H1 (cell line): ENCODE measurements at regions of chr1 and their contacts with region 1.

Region 1: DNA sequence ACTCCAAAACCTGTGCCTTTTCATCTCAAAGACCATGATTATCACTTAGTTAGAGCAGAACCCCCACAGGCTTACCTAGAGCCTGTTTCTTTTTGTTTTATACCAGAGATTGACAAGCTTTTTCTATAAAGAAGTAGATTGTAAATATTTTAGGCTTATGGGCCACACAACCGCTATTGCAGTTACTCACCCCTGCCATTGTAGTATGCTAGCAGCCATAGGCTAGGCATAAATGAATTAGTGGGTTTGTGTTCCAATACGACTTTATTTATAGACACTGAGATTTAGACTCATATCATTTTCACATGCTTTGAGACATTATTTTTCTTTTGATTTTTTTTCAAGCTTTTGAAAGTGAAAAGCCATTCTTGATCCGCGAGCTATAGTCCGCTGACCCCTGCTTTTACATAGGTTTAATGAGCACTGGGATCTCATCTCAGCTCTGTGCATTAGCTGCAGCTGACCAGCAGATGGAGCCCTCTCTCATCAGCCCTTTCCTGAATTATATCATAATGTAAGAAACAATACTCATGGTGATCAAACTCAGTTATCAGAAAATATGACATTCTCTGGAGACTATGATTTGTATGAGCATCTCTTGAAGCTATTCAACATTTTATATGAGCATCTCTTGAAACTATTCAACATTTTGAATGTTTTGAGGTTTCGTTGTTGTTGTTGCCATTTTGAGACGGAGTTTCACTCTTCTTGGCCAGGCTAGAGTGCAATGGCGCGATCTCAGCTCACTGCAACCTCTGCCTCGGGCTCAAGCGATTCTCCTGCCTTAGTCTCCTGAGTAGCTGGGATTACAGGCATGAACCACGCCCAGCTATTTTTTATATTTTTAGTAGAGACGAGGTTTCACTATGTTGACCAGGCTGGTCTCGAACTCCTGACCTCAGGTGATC is 111.9 kb upstream of the L1TD1 start:
- DNase-seq: no peak
- H3K4me3 ChIP-seq: no peak overlapping the region
- H3K27ac ChIP-seq: no peak overlapping the region
- H3K4me1 ChIP-seq: no peaks in the 10 kb centered on the region
- H3K27me3 ChIP-seq: no peaks in the 10 kb centered on the region
- CTCF ChIP-seq: peak; percentile 61 to 93 (median 79)
- EP300 ChIP-seq: no peak
- POLR2A ChIP-seq: no peak
- RAD21 ChIP-seq: peak; percentile 61 to 67

Region 2: GRCh38 chr1:61776091-61776490 is 306.6 kb before region 1 on chr1:
- CTCF ChIA-PET with region 1: no interaction called
- POLR2A ChIA-PET with region 1: no interaction called
- DNase-seq: no peak
- H3K4me3 ChIP-seq: no peak overlapping the region
- H3K27ac ChIP-seq: no peak overlapping the region
- H3K4me1 ChIP-seq: no peaks in the 10 kb centered on the region
- H3K27me3 ChIP-seq: no peaks in the 10 kb centered on the region
- CTCF ChIP-seq: no peak
- EP300 ChIP-seq: no peak
- POLR2A ChIP-seq: no peak
- RAD21 ChIP-seq: no peak

Region 3: DNA sequence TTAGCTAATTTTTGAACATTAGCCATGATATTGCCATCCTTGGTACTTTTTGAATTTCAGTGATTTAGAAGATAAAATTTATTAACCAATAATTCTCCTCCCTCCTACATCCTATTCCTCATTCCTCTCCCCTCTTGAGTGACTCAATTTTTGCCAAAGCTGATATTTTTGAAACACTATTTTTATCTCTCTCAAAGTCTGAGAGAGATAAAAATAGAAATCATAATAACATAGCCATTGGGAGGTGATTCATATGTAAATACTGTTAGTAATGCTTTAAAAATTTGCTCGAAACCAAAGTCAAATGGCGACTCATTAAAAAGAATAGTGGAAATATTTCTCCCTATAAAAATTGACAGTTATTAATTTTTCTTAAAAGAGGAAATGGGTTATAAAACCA is 243.0 kb before region 1 on chr1:
- CTCF ChIA-PET with region 1: no interaction called
- POLR2A ChIA-PET with region 1: no interaction called
- DNase-seq: no peak
- H3K4me3 ChIP-seq: no peak overlapping the region
- H3K27ac ChIP-seq: no peak overlapping the region
- H3K4me1 ChIP-seq: peaks cover 0 to 2% (median under 1%) of the 10 kb centered on the region in 4 experiments; a peak in 1 of 7 replicates
- H3K27me3 ChIP-seq: no peaks in the 10 kb centered on the region
- CTCF ChIP-seq: no peak
- EP300 ChIP-seq: no peak
- POLR2A ChIP-seq: no peak
- RAD21 ChIP-seq: no peak

Region 4: GRCh38 chr1:61930116-61930645 is 152.5 kb before region 1 on chr1:
- CTCF ChIA-PET with region 1: interaction called, 18 read pairs
- POLR2A ChIA-PET with region 1: no interaction called
- DNase-seq: no peak
- H3K4me3 ChIP-seq: no peak overlapping the region
- H3K27ac ChIP-seq: no peak overlapping the region
- H3K4me1 ChIP-seq: no peaks in the 10 kb centered on the region; a peak in 1 of 7 replicates
- H3K27me3 ChIP-seq: no peaks in the 10 kb centered on the region
- CTCF ChIP-seq: no peak
- EP300 ChIP-seq: no peak
- POLR2A ChIP-seq: no peak
- RAD21 ChIP-seq: no peak

Region 5: DNA sequence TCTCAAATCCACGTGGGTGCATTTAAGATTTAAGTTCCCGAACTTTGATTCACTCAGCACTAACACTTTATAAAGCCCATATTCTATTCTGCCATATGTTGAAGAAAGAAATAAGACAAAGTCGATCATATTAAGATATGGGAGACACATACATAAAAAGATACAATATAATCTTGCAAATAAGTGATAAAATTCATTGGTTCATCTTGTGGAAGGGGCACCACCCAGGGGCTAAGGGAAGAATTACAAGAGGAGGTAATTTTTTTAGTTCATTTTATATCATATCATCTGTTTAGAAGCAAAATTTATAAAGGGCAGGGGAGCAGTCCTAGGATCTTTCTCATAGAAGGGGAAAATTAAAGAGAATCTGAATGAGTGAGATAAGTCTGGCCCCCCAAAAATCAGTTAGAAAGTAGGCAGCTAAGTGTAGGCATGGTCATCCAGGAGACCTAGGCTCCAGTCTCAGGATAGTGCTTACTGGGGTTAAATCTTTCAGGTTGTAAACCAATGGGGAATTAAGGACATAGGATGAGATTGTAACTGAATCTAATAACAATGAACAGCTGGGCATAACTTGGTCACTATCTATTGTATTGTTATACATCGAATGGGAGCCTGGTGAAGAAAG is 12.2 kb before region 1 on chr1:
- CTCF ChIA-PET with region 1: interaction called, 19 read pairs
- POLR2A ChIA-PET with region 1: interaction called, 3 read pairs
- DNase-seq: no peak
- H3K4me3 ChIP-seq: no peak overlapping the region
- H3K27ac ChIP-seq: no peak overlapping the region
- H3K4me1 ChIP-seq: no peaks in the 10 kb centered on the region
- H3K27me3 ChIP-seq: no peaks in the 10 kb centered on the region
- CTCF ChIP-seq: peak in 2 of 3 experiments; percentile 20 to 59; a peak in 2 of 4 replicates
- EP300 ChIP-seq: no peak
- POLR2A ChIP-seq: no peak
- RAD21 ChIP-seq: peak; percentile 62 to 76

Region 6: DNA sequence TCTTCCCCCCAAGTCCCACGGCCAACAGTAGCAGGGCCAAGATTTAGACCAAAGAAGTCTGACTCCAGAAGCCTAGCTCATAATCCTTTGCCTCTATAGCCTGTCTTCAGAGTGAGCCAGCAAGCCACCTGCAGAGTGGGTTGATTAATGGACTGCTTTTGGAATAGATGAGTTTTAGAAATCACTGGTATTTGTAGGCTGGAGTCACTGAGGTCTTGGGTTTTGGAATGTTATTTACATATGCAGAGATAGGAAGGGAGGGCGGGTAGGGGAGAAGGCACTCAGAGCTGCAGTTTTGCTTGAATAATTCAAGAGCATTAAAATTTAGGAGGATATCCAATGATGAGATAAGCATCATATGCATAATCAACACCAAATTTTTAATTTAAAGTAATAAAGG is 21.2 kb after region 1 on chr1:
- CTCF ChIA-PET with region 1: interaction called, 77 read pairs
- POLR2A ChIA-PET with region 1: no interaction called
- DNase-seq: no peak
- H3K4me3 ChIP-seq: no peak overlapping the region
- H3K27ac ChIP-seq: no peak overlapping the region
- H3K4me1 ChIP-seq: peaks cover 0 to 3% (median 1%) of the 10 kb centered on the region in 4 experiments; a peak in 3 of 7 replicates
- H3K27me3 ChIP-seq: no peaks in the 10 kb centered on the region
- CTCF ChIP-seq: no peak
- EP300 ChIP-seq: no peak
- POLR2A ChIP-seq: no peak
- RAD21 ChIP-seq: no peak

Region 7: GRCh38 chr1:62131093-62131725 is 48.5 kb after region 1 on chr1:
- CTCF ChIA-PET with region 1: interaction called, 30 read pairs
- POLR2A ChIA-PET with region 1: no interaction called
- DNase-seq: peak in 1 of 2 experiments; percentile 63
- H3K4me3 ChIP-seq: no peak overlapping the region
- H3K27ac ChIP-seq: no peak overlapping the region
- H3K4me1 ChIP-seq: no peaks in the 10 kb centered on the region
- H3K27me3 ChIP-seq: no peaks in the 10 kb centered on the region
- CTCF ChIP-seq: peak; percentile 60 to 98 (median 76)
- EP300 ChIP-seq: no peak
- POLR2A ChIP-seq: no peak
- RAD21 ChIP-seq: peak; percentile 82 to 83

Region 8: DNA sequence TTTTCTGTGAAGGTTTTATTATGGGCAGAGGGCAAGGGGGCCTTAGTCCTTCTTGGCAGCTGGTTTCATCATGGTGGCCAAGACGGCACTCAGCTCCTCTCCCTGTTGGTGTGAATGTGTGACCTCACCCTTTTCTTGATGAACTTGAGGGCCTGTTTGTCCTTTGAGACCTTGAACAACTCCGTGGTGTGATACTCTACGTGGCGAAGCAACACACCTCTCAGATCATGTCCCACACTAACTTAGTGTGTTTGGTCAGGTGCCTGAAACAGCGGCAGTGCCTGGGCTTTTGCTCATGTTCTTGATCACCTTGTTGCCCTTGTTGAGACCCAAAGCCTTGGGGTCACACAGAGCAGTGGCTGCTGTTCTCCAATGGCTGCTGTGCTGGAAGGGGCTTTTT is 125.4 kb after region 1 on chr1:
- CTCF ChIA-PET with region 1: no interaction called
- POLR2A ChIA-PET with region 1: no interaction called
- DNase-seq: no peak
- H3K4me3 ChIP-seq: no peak overlapping the region
- H3K27ac ChIP-seq: no peak overlapping the region
- H3K4me1 ChIP-seq: peaks cover 0 to 5% (median 0%) of the 10 kb centered on the region in 4 experiments; a peak in 1 of 7 replicates
- H3K27me3 ChIP-seq: no peaks in the 10 kb centered on the region
- CTCF ChIP-seq: no peak
- EP300 ChIP-seq: no peak
- POLR2A ChIP-seq: peak in 1 of 2 experiments; percentile 67; a peak in 1 of 3 replicates
- RAD21 ChIP-seq: no peak